Activated T-helper 2 cell treated with anti-CD3 and anti-CD28 coated beads, Interferon-gamma antibody, Interleukin-2, Interleukin-4, amounts not matched to agents 10 μg/mL and 5 μg/mL and 100 μg/mL, durations not matched to agents 14 hours and 24 hours and 36 hours (primary cell): ENCODE measurements at regions of chrX and their contacts with region 1.

Region 1: DNA sequence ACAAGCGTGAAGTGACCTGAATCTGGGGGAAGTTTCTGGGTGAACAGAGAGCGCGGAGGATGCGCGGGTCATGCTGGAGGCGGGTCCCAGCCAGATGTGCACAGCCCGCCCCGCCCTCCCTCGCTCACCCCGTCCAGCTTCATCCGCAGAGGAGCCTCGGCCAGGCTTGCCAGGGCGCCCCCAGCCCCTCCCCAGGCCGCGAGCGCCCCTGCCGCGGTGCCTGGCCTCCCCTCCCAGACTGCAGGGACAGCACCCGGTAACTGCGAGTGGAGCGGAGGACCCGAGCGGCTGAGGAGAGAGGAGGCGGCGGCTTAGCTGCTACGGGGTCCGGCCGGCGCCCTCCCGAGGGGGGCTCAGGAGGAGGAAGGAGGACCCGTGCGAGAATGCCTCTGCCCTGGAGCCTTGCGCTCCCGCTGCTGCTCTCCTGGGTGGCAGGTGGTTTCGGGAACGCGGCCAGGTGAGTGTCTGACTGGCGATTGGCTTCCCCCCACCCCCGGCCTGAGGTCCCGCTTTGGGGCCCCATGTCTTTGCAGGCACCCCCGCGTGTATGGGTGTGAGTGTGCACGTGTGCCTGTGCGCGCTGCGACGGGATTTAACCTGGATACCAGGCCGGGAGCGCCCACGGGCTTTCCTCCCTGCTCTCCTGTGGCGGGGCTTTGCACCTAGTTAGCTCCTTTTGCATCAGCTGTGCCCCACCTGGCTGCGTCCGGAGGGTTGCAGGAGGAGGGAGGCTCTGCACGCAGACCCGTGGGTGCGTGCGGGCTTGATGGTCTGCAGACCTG is at the start of gene EGFL6:
- DNase-seq: no peak
- H3K4me3 Mint-ChIP-seq: peak within 1 kb of the TSS; percentile 69
- H3K27ac Mint-ChIP-seq: no peak within 1 kb of the TSS
- H3K4me1 Mint-ChIP-seq: peaks cover 33% of the 10 kb centered on the region
- H3K27me3 Mint-ChIP-seq: peaks cover 29% of the 10 kb centered on the region
- total RNA-seq, gene EGFL6: 2.3 and 3.4 TPM in 2 replicates

Region 2: DNA sequence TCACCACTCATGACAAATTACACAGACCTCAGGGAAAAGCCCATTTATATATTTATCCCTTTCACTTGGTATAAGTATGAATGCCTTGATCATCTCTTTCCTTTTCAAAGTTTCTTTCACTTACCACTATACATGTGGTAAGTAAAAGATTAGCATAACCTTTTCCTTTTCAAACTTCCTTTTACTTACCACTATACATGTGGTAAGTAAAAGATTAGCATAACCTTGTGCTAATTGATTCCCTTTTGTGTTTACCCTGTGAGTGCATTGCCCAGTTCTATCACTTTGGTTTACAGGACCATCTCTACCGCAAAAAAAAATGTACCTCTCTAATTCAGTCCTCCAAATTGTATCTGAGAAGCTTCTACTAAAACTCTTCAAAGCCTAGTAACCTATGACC is 50.5 kb after region 1 on chrX:
- intact Hi-C with region 1: loop called (anchors 5 kb)
- DNase-seq: no peak
- H3K4me3 Mint-ChIP-seq: no peak overlapping the region
- H3K27ac Mint-ChIP-seq: no peak overlapping the region
- H3K4me1 Mint-ChIP-seq: peaks cover 10% of the 10 kb centered on the region
- H3K27me3 Mint-ChIP-seq: no peaks in the 10 kb centered on the region